ENCODE measurements at regions of chr15 and their contacts with region 1.

Region 1: DNA sequence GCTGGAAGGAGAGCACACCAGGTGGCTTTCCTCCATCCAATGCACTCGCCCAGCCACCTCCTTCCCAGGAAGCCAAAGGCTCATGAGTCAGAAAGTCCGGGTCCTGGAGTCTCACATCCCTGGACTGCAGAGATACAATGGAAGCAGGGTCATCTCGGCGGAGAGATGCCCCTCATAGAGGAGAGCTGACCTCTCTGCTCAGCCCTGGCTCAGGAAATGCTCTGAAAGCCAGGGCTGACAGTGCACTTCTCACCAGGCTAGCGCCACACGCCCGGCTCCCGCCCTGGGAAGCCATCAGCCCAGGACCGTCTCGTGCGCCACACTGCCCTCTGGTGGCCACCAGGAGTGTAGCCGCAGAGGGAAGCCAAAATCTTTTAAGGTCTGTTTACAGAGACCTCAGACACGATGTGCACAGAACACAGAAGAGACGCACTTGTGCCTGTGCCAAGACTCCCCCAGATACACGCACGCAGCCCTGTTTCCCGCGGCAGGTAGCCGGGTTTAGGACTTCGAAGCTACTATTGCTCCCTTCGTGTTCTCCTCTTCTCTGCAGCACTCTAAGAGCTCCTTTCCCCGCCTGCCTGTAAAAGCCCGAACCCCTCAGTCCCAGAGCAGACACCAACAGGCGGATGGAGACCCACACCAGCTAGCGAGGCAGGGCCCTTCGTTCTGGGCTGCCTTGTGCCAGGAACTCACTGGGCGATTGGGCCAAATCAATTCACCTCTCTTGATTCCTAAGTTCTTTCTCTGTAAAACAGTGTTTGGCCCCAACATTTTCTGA is 9.7 kb downstream of the NTRK3 start:
- DNase-seq: peak; percentile 85
- CTCF ChIP-seq: peak; percentile 94

Region 2: DNA sequence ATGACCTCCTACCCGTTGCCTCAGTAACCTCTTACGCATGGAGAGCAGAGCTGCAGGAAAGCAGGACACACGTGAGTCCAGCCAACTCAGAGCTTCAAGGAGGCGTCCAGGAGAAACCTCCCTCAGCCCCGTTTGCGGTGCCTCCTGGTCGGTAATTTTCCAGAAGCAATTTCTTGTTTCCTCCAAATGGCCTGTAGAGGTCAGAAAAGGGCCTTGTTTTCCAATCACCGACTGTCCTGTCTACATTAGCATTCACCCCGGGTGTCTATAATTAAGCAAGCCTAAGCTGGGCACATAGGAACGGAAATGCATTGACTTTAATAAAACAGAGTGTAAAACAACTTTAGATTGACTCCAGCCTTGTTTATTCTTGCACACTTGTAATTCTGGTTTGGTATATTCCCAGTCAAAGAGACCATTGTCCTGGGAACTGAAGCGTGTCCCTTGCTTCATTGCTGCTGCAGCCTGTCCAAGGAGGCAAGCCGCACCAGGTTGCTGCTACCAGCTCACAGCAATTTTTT is 1331.0 kb before region 1 on chr15:
- in situ Hi-C with region 1: loop called (anchors 25 kb)
- DNase-seq: peak; percentile 28
- CTCF ChIP-seq: no peak

Region 3: DNA sequence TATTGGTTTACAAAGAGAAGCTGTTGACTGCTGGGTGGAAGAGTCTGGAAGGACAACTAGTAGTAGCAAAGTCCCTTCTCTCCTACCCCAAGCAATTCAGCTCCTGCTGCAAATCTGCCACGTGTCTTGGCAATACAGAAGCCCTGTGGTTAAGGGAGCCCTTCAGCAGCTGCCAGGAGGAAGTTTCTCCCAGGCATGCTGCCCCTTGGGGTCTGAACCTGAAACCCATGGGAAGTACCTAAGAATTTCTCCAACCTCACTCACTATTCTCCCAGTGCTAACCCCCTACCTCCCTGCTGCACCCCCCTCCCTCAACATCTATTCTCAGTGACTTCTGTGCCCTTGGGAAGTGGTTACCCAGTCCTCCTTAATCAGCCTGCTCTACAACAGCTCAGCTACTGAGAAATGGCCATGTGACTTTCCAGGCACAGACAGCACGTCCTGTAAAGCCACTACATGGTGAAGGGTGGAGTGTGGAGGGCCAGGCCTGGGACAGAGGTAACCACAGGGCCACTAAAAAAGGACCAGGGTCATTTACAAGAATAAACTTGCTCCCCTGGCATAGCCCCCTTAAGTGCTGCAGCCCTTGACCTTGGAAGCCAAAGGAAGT is 306.9 kb before region 1 on chr15:
- in situ Hi-C with region 1: no loop called
- DNase-seq: no peak
- CTCF ChIP-seq: no peak

Region 4: GRCh38 chr15:88018856-88019641 is 227.8 kb before region 1 on chr15:
- in situ Hi-C with region 1: loop called (anchors 25 kb)
- DNase-seq: no peak
- CTCF ChIP-seq: no peak

Region 5: GRCh38 chr15:88126695-88127431 is 120.0 kb before region 1 on chr15:
- in situ Hi-C with region 1: loop called (anchors 25 kb)
- DNase-seq: no peak
- CTCF ChIP-seq: no peak

Region 6: GRCh38 chr15:88179562-88179961 is 67.3 kb before region 1 on chr15:
- in situ Hi-C with region 1: no loop called
- DNase-seq: peak; percentile 47
- CTCF ChIP-seq: no peak

Region 7: DNA sequence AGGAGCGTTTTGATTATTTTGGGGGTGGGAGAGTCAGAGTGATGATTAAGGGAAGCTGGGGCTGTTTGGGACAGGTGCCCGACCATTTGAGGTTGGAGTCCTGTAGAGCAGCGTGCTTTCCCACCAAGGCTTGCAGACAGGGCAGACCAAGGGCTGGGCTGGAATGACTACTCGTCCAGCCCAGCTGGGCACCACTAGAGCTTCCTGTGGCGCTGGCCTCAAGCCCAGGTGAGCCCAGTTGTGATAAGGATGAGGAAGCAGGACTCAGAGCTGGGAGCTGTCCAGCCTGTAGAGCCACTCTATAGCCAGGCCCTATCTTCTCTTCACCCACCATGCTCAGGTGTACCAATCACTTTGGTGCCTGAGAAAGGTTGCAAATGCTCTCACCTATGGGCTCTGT is 480.6 kb after region 1 on chr15:
- in situ Hi-C with region 1: no loop called
- DNase-seq: peak; percentile 2
- CTCF ChIP-seq: no peak

Measured in GM13976 (cell line).